Activated T-helper 1 cell treated with anti-CD3 and anti-CD28 coated beads, Interleukin-12 subunit alpha, Interleukin-12 subunit beta, Interleukin-2, Interleukin-4 antibody, amounts not matched to agents 30 ng/mL and 10 ng/mL and 1 ng/mL, durations not matched to agents 14 hours and 24 hours and 36 hours (primary cell): ENCODE measurements at regions of chr1 and their contacts with region 1.

Region 1: GRCh38 chr1:151008190-151008860 is at the start of gene PRUNE1:
- DNase-seq: peak; percentile 94
- H3K4me3 Mint-ChIP-seq: peak within 1 kb of the TSS; percentile 100
- H3K27ac Mint-ChIP-seq: peak within 1 kb of the TSS; percentile 96
- H3K4me1 Mint-ChIP-seq: peaks cover 79% of the 10 kb centered on the region
- H3K27me3 Mint-ChIP-seq: no peaks in the 10 kb centered on the region
- total RNA-seq, gene PRUNE1: 15.0 and 15.4 TPM in 2 replicates

Region 2: GRCh38 chr1:150268705-150269403 is 739.5 kb before region 1 on chr1 and contains the start of gene APH1A:
- intact Hi-C with region 1: loop called (anchors 2 kb)
- DNase-seq: peak; percentile 94
- H3K4me3 Mint-ChIP-seq: peak within 1 kb of the TSS; percentile 93
- H3K27ac Mint-ChIP-seq: peak within 1 kb of the TSS; percentile 85
- H3K4me1 Mint-ChIP-seq: peaks cover 30% of the 10 kb centered on the region
- H3K27me3 Mint-ChIP-seq: peaks cover 3% of the 10 kb centered on the region
- total RNA-seq, gene APH1A: 102 and 111 TPM in 2 replicates

Region 3: DNA sequence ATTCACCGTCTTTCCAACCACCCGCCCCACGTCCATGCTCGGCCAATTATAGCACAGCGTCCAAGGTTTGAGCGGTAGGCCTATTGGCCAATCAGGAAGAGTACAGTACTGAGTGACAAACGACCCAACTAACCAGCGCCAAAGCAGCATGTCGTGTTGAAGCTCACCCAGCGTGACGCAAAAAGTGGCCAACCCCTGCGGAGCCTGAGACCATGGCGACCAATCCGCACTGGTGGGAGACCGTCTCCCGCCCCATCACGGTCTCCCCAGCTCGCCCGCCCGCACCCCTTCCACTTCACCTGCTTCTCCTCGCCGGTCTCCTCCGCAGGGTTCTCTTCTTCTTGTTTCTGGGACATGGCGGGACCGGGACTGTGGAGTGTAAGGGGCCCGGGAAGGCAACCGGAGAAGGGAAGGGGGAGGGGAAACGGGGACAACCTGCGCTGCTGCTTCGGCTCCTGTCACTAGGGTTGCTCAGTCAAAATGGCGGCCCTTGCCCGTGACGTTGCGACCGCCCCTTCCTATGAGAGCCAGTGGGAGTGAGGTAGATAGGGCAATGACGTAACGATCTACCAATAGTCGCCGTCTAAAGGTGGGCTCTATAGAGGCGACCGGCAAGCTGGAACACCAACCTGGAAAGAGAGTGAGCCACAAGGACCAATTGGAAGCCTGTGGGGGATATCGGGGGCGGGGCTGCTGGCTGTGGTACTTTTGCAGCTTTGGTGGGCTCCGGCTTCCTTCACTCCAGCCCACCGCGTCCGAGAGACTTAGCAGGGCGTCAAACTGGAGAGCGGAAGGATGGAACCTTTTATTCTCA is 379.0 kb before region 1 on chr1 and contains the start of gene ENSA:
- intact Hi-C with region 1: loop called (anchors 1 kb)
- DNase-seq: peak; percentile 94
- H3K4me3 Mint-ChIP-seq: no peak within 1 kb of the TSS
- H3K27ac Mint-ChIP-seq: no peak within 1 kb of the TSS
- H3K4me1 Mint-ChIP-seq: peaks cover 43% of the 10 kb centered on the region
- H3K27me3 Mint-ChIP-seq: peaks cover 1% of the 10 kb centered on the region
- total RNA-seq, gene ENSA: 282 and 285 TPM in 2 replicates

Region 4: GRCh38 chr1:150995896-150996295 is 12.4 kb before region 1 on chr1:
- intact Hi-C with region 1: loop called (anchors 1 kb)
- DNase-seq: peak; percentile 20
- H3K4me3 Mint-ChIP-seq: no peak overlapping the region
- H3K27ac Mint-ChIP-seq: no peak overlapping the region
- H3K4me1 Mint-ChIP-seq: peaks cover 8% of the 10 kb centered on the region
- H3K27me3 Mint-ChIP-seq: no peaks in the 10 kb centered on the region

Region 5: GRCh38 chr1:151059078-151059907 is 51.0 kb after region 1 on chr1 and contains the start of gene CDC42SE1:
- intact Hi-C with region 1: loop called (anchors 1 kb)
- DNase-seq: peak; percentile 81
- H3K4me3 Mint-ChIP-seq: peak within 1 kb of the TSS; percentile 95
- H3K27ac Mint-ChIP-seq: peak within 1 kb of the TSS; percentile 97
- H3K4me1 Mint-ChIP-seq: peaks cover 65% of the 10 kb centered on the region
- H3K27me3 Mint-ChIP-seq: no peaks in the 10 kb centered on the region
- total RNA-seq, gene CDC42SE1: 216 and 219 TPM in 2 replicates

Region 6: DNA sequence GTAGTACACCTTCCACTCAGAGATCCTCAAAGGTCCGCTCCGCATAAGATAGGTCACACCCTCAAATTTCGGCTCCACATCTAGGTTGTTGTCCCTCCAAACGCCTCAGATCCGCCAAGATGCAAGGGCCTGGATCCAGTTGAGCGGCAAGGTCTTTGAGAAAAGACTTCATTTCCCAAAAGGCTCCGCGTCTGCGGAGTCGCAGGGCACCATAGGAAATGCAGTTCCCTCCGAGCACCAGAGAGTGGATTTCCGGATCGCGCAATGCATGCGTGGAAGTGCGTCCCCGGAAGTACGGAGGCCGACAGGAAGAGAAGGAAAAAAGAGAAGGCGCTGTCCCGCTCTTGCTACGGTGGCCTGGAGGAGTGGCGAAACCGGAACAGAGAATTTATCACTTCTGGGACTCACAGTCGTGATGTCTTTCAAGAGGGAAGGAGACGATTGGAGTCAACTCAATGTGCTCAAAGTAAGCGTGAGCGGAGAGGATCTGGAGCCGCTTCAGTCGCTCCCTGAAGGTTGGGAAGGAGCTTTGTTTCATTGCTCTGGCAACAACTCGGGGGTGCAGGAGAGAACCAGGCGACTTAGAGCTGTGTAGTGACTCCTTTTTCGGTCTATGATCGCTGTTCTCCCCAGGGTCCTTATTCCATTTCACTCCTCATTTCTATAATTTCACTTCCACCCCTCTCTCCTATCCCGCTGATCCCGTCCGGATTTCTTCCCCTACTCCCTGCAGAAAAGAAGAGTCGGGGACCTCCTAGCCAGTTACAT is 157.6 kb after region 1 on chr1 and contains the starts of genes LYSMD1 and SCNM1:
- intact Hi-C with region 1: loop called (anchors 1 kb)
- DNase-seq: peak; percentile 96
- H3K4me3 Mint-ChIP-seq: peak within 1 kb of the TSS; percentile 95
- H3K27ac Mint-ChIP-seq: peak within 1 kb of the TSS; percentile 97
- H3K4me1 Mint-ChIP-seq: peaks cover 53% of the 10 kb centered on the region
- H3K27me3 Mint-ChIP-seq: peaks cover 2% of the 10 kb centered on the region
- total RNA-seq, gene LYSMD1: 4.0 and 5.0 TPM in 2 replicates
- total RNA-seq, gene SCNM1: 111 and 117 TPM in 2 replicates